ENCODE measurements at regions of chr6 and their contacts with region 1.

Region 1: DNA sequence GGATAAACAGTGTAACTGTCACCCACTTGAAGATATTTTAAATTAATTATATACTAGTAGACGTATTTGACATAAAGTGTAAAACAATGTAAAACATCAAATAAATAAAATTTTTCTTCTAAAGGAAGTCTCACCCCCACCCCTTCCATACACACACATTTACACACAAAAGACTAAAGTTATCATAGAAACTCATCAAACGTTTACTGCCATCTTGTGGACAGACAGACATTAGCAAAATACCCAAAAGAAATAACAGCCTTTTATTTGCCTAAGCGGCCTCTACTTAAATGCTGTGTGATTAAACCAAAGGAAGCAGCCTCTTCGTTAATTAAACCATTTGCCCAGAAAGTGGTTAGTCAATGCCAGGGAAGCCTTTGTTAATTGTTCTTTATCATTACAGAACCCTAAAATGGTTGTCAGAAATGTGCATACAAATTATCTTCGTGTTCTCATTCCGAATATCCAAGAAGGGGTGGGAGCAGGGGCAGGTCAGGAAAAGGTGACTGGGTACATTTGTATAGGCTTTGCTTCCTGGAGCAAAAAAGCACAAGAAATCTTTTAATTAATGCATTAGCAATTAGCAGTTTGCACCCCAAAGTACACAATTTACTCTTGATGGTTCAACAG is 176.2 kb upstream of the SASH1 start:
- DNase-seq: no peak
- ATAC-seq: no peak
- H3K4me3 ChIP-seq: no peak overlapping the region
- H3K27ac ChIP-seq: no peak overlapping the region
- H3K4me1 ChIP-seq: no peaks in the 10 kb centered on the region
- H3K27me3 ChIP-seq: peaks cover 0 to 4% (median 0%) of the 10 kb centered on the region in 3 donors
- CTCF ChIP-seq: peak; percentile 70

Region 2: DNA sequence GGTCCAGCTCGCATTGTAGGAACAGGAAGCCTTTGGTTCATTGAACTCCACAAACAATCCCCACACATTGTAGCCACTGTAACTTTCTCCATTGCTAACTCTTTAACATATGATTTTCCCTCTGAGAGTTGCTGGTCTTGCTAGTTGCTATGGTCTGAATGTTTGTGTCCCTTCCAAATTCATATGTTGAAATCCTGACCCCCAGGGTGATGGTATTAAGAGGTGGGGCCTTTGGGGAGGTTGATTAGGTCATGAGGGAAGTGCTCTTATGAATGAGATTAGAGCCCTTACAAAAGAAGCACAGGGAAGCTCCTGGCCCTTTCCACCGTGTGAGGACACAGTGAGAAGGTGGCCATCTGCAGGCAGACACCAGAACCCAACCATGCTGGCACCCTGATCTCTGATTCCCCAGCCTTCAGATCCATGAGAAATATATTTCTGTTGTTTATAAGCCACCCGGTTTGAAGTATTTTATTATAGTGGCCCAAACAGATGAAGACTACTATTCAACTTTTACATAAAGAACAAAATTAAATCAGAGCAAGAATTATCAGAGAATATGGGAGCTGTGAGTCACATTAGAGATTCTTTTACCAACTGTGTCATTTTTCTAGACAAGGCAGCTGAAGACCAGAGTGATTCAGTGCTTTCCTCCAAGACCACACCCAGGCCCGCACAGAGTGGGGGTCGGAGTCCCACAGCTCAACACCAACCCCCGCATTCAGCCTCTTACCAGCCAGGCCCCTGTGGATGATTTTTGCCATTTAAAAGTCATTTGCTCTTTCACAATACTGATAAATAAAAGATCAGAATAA is 515.0 kb before region 1 on chr6:
- intact Hi-C with region 1: loop called in 1 of 2 experiments (anchors 10 kb)
- DNase-seq: no peak
- ATAC-seq: peak in 3 of 4 donors; percentile 58 to 61 (median 61)
- H3K4me3 ChIP-seq: no peak overlapping the region
- H3K27ac ChIP-seq: no peak overlapping the region
- H3K4me1 ChIP-seq: no peaks in the 10 kb centered on the region
- H3K27me3 ChIP-seq: no peaks in the 10 kb centered on the region
- CTCF ChIP-seq: peak; percentile 40

Region 3: DNA sequence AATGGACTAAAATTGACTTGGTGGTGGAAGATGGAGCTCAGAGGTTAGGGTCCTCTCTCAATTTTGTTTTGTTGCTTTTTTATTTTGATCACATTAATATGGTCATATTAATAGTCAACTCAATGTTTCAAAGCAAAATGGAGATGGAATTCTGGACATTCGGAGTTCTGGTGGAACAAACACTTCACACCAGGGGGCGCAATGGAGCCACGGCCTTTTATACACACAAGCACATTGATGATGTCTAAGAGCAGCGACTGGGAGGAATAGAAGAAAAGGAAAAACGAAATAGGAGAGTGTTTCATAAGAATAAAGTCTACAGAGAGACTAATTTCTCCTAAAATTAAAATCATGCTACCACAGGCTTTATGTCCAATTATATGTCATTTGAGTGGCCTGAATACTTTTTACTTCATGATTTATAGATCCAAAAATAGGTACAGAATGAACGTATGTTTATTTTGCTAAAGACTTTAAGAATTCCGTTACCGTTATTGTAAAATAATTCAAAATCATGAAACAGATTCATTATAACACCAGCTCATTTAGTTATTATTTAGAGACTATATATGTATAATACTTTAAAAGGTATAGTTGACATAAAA is 21.4 kb before region 1 on chr6:
- intact Hi-C with region 1: loop called in 1 of 2 experiments (anchors 2 kb)
- DNase-seq: peak; percentile 75 to 86
- ATAC-seq: peak in 3 of 4 donors; percentile 55 to 80 (median 56)
- H3K4me3 ChIP-seq: peak overlapping the region; percentile 25
- H3K27ac ChIP-seq: no peak overlapping the region
- H3K4me1 ChIP-seq: no peaks in the 10 kb centered on the region
- H3K27me3 ChIP-seq: peaks cover 0 to 3% (median 0%) of the 10 kb centered on the region in 3 donors
- CTCF ChIP-seq: peak; percentile 78

Region 4: DNA sequence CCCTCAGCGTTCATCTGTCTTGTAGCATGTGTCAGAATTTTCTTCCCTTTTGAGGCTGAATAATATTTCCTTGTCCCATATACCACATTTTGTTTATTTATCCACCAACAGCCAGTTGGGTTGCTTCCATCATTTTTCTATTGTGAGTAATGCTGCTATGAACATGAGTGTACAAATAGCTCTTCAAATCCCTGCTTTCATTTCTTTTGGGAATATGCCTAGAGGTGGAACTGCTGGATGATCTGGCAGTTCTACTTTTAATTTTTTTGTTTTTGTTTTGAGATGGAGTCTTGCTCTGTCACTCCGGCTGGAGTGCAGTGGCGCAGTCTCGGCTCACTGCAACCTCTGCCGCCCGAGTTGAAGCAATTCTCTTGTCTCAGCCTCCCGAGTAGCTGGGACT is 240.9 kb after region 1 on chr6:
- intact Hi-C with region 1: no loop called
- DNase-seq: peak; percentile 32 to 68
- ATAC-seq: peak; percentile 27 to 79 (median 57)
- H3K4me3 ChIP-seq: no peak overlapping the region
- H3K27ac ChIP-seq: peak overlapping the region; percentile 50
- H3K4me1 ChIP-seq: no peaks in the 10 kb centered on the region
- H3K27me3 ChIP-seq: no peaks in the 10 kb centered on the region
- CTCF ChIP-seq: no peak